ENCODE measurements at regions of chr2 and their contacts with region 1.

Region 1: GRCh38 chr2:85728883-85729824 is 24.6 kb upstream of the ATOH8 start:
- DNase-seq: peak; percentile 16 to 84 (median 58)
- ATAC-seq: peak; percentile 88
- H3K4me3 ChIP-seq: no peak overlapping the region
- H3K4me3 Mint-ChIP-seq: no peak overlapping the region
- H3K27ac ChIP-seq: no peak overlapping the region
- H3K27ac Mint-ChIP-seq: peak overlapping the region in 1 of 9 donors; percentile 12
- H3K4me1 ChIP-seq: peaks cover 0 to 8% of the 10 kb centered on the region in 2 donors
- H3K4me1 Mint-ChIP-seq: peaks cover 0 to 9% (median 0%) of the 10 kb centered on the region in 7 donors
- H3K27me3 ChIP-seq: no peaks in the 10 kb centered on the region
- H3K27me3 Mint-ChIP-seq: peaks cover 0 to 30% (median 8%) of the 10 kb centered on the region in 5 donors

Region 2: DNA sequence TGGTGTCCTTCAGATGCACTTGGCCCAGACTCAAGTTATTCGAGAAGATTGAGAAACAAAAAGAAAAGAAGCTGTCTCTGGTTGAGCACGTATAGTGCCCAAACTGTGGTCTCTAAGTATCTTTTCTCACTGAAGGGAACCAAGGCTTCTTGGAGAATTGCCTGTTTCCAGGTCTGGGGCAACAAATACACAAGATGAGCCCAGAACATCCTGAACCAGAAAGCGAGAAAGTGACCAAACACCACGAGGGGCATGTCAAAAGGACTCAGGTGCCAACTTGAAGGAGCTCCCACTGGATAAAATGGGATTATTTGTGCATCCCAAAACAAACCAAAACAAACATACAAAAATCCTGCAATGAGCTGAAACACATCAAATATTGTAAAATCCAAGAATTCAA is 11.0 kb after region 1 on chr2:
- CTCF ChIA-PET with region 1: interaction called, 11 read pairs
- POLR2A ChIA-PET with region 1: no interaction called
- intact Hi-C with region 1: no loop called
- DNase-seq: no peak
- ATAC-seq: no peak
- H3K4me3 ChIP-seq: no peak overlapping the region
- H3K4me3 Mint-ChIP-seq: no peak overlapping the region
- H3K27ac ChIP-seq: no peak overlapping the region
- H3K27ac Mint-ChIP-seq: no peak overlapping the region
- H3K4me1 ChIP-seq: no peaks in the 10 kb centered on the region
- H3K4me1 Mint-ChIP-seq: peaks cover 0 to 3% (median 0%) of the 10 kb centered on the region in 7 donors
- H3K27me3 ChIP-seq: no peaks in the 10 kb centered on the region
- H3K27me3 Mint-ChIP-seq: peaks cover 11 to 68% (median 34%) of the 10 kb centered on the region in 5 donors

Region 3: GRCh38 chr2:85769236-85769984 is 40.3 kb after region 1 on chr2:
- CTCF ChIA-PET with region 1: no interaction called
- POLR2A ChIA-PET with region 1: no interaction called
- intact Hi-C with region 1: no loop called
- DNase-seq: no peak
- ATAC-seq: no peak
- H3K4me3 ChIP-seq: no peak overlapping the region
- H3K4me3 Mint-ChIP-seq: no peak overlapping the region
- H3K27ac ChIP-seq: no peak overlapping the region
- H3K27ac Mint-ChIP-seq: no peak overlapping the region
- H3K4me1 ChIP-seq: no peaks in the 10 kb centered on the region
- H3K4me1 Mint-ChIP-seq: peaks cover 0 to 8% (median 3%) of the 10 kb centered on the region in 7 donors
- H3K27me3 ChIP-seq: peaks cover 0 to 3% of the 10 kb centered on the region in 2 donors
- H3K27me3 Mint-ChIP-seq: peaks cover 41 to 61% (median 49%) of the 10 kb centered on the region in 5 donors

Region 4: DNA sequence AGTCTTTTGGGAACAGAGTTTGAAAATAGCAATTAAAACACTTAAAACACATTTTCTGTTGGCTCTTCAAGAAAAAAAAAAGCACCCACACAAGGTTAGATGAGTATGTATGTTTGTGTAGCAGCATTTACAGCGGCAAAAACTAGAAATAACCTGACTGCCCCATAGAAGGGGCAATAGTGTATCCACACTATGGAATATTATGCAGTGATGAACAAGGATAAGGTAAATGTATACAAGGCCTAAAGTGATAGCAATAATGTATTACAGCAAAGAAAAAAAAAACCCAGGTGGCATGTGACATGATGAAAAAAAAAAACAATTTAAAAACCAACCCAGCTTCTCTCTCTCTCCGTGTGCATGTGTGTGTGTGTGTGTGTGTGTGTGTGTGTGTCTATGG is 341.7 kb after region 1 on chr2:
- CTCF ChIA-PET with region 1: no interaction called
- POLR2A ChIA-PET with region 1: no interaction called
- intact Hi-C with region 1: no loop called
- DNase-seq: no peak
- ATAC-seq: no peak
- H3K4me3 ChIP-seq: no peak overlapping the region
- H3K4me3 Mint-ChIP-seq: no peak overlapping the region
- H3K27ac ChIP-seq: no peak overlapping the region
- H3K27ac Mint-ChIP-seq: no peak overlapping the region
- H3K4me1 ChIP-seq: peaks cover 12 to 14% of the 10 kb centered on the region in 2 donors
- H3K4me1 Mint-ChIP-seq: peaks cover 10 to 33% (median 13%) of the 10 kb centered on the region in 7 donors
- H3K27me3 ChIP-seq: no peaks in the 10 kb centered on the region
- H3K27me3 Mint-ChIP-seq: no peaks in the 10 kb centered on the region

Measured in naive thymus-derived CD4-positive, alpha-beta T cell (primary cell).